ENCODE measurements at regions of chr12 and their contacts with region 1.

Region 1: DNA sequence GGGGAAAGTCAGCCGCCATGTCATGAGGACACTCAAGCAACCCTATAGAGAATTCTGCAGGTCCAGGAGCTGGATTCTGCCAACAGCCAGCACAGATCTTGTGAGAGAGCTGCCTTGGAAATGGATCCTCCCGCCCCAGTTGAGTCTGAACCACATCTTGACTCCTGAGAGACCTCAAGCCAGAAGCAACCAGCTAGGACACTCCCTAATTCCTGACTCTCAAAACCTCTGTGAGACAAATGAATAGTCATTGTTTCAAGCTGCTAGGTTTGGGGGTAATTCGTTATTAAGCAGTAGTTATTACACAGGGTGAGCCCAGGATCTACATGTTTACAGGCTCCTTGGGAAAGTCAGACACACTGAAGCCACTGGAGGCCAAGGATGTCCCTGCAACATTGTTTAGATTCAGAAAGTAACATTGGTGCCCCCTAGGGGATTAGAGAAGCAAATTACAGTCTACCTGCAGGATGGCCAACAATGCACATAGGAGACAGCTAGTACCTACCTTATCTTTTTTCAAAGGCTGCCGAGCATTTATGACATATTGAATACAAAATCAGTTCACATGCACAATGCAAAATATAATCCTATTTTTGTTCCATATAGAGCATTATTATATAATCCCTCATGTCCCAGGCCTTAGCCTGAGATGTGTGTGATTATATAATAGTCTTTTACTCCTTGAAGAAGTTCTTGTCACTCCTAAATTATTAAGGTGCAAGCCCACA is 57.9 kb upstream of the FICD start:
- DNase-seq: peak in 1 of 2 experiments; percentile 52
- H3K4me3 ChIP-seq: no peak overlapping the region
- H3K27ac ChIP-seq: no peak overlapping the region
- H3K4me1 ChIP-seq: peaks cover 0 to 3% (median 0%) of the 10 kb centered on the region in 4 experiments; a peak in 2 of 7 replicates
- H3K27me3 ChIP-seq: no peaks in the 10 kb centered on the region
- CTCF ChIP-seq: peak in 2 of 3 experiments; percentile 84 to 91; a peak in 3 of 4 replicates
- EP300 ChIP-seq: no peak
- POLR2A ChIP-seq: no peak
- RAD21 ChIP-seq: peak; percentile 87 to 94

Region 2: DNA sequence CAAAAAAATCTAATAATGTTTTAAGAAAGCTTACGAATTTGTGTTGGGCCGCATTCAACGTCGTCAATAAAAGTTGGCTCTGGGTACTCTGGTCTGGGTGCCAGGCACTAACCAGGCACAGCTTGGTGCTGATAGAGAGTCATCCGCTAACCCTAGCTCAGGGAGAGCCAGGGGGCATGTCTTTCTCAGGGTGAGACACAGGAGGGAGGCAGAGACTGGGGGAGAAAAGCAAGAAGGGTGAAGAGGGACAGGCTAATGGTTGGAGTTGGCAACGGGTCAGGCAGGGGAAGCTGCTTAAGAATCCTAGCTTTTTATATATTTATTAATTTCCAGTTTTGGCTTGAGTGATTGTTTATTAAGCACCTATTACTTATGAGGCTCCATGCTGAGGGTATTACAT is 223.0 kb before region 1 on chr12:
- CTCF ChIA-PET with region 1: interaction called, 15 read pairs
- POLR2A ChIA-PET with region 1: no interaction called
- DNase-seq: no peak
- H3K4me3 ChIP-seq: no peak overlapping the region
- H3K27ac ChIP-seq: no peak overlapping the region
- H3K4me1 ChIP-seq: peaks cover 5 to 27% (median 11%) of the 10 kb centered on the region in 4 experiments; a peak in 6 of 7 replicates
- H3K27me3 ChIP-seq: no peaks in the 10 kb centered on the region
- CTCF ChIP-seq: peak in 2 of 3 experiments; percentile 21 to 24; a peak in 1 of 4 replicates
- EP300 ChIP-seq: no peak
- POLR2A ChIP-seq: no peak
- RAD21 ChIP-seq: peak; percentile 49 to 67

Region 3: DNA sequence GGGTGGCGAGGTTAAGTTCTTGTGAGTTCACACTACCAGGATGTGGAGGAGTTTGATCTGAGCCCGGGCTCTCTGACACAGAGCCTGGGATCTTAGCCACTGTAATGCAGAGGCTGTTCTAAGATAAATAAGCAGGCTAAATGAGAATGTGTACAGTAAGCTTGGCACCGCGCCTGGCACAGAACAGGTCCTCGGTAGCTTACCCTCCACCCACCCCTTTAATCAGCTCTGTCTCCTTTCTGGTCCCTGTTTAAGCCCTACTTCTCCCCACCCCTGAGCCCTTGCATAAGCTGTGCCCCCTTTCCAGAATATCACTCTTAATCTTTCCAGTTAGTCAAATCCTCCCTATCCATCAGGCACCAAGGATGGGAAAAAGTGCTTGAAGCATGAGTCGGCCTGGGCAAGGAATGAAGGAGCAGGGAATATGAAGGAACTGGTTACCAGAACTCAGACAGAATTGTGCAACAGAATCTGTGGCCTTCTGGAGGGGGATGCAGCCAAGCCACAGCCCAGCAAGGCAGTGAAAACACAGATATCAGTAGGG is 85.3 kb before region 1 on chr12:
- CTCF ChIA-PET with region 1: interaction called, 40 read pairs
- POLR2A ChIA-PET with region 1: no interaction called
- DNase-seq: no peak
- H3K4me3 ChIP-seq: no peak overlapping the region
- H3K27ac ChIP-seq: no peak overlapping the region
- H3K4me1 ChIP-seq: peaks cover 0 to 6% (median 0%) of the 10 kb centered on the region in 4 experiments; a peak in 1 of 7 replicates
- H3K27me3 ChIP-seq: no peaks in the 10 kb centered on the region
- CTCF ChIP-seq: no peak
- EP300 ChIP-seq: no peak
- POLR2A ChIP-seq: no peak
- RAD21 ChIP-seq: no peak

Region 4: GRCh38 chr12:108468201-108468968 is 11.2 kb after region 1 on chr12:
- CTCF ChIA-PET with region 1: interaction called, 18 read pairs
- POLR2A ChIA-PET with region 1: interaction called, 5 read pairs
- DNase-seq: no peak
- H3K4me3 ChIP-seq: no peak overlapping the region
- H3K27ac ChIP-seq: no peak overlapping the region
- H3K4me1 ChIP-seq: no peaks in the 10 kb centered on the region
- H3K27me3 ChIP-seq: no peaks in the 10 kb centered on the region
- CTCF ChIP-seq: no peak
- EP300 ChIP-seq: no peak
- POLR2A ChIP-seq: no peak
- RAD21 ChIP-seq: no peak

Region 5: DNA sequence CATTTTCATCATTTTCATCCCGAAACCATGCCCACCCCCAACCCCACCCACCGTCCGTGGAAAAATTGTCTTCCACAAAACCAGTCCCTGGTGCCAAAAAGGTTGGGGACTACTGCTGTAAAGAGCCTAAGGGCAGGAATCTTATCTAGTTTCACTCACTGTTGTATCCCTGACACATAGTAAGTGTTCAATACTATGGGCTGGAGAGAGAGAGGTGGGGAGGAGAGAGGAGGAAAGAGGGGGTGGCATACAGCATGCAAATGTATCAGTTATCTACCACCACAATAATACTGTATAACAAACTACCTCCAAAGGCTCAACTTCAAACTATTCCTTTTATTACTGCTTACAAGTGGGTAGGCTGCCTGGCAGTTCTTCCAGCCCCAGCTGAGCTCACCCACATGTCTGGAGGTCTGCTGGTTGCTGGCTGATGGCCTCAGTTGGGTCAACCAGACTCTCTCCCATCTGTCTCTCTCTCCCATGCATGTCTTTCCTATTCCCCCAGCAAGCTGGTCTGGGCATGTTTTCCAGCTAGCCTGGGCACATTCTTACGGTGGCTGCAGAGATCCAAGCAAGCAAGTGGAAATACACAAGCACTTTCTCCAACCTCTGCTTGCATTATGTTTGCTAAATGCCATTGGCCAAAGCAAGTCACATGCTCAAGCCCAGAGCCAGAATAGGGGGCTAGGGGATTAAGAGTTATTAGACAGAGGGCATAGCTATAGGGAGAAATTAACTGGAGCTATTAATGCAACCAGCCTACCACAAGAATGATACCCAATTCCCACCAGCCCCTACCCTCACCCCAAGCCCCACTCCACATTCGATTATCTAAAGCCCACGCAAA is 26.3 kb after region 1 on chr12:
- CTCF ChIA-PET with region 1: interaction called, 10 read pairs
- POLR2A ChIA-PET with region 1: no interaction called
- DNase-seq: no peak
- H3K4me3 ChIP-seq: no peak overlapping the region
- H3K27ac ChIP-seq: no peak overlapping the region
- H3K4me1 ChIP-seq: peaks cover 0 to 5% (median 3%) of the 10 kb centered on the region in 4 experiments; a peak in 3 of 7 replicates
- H3K27me3 ChIP-seq: no peaks in the 10 kb centered on the region
- CTCF ChIP-seq: no peak
- EP300 ChIP-seq: no peak
- POLR2A ChIP-seq: no peak
- RAD21 ChIP-seq: no peak

Region 6: DNA sequence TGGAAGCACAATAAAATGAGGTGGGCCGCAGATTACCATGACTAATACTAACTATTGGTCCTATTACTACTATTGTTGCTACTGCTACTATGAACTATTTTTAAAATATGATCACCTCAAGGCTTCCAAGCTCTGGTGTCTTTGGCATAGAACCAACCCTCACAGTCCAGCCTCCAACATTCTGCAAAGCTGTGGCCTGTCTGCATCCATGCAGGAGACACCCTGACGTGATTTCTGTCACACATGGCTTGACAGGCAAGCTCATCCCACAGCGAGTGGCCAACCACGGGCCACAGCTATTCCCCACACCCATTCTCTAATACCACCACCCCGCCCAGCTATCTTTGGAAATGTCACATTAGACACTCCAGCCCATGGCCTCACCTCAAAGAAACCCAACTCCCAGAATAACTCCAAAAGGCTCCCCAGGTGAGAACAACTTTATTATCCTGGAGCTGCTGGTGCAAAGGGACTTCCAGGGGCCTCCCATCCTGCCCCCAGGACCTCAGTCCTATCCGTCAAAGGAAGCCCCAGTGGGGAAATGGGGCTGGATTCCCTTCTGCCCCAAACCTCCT is 119.6 kb after region 1 on chr12:
- CTCF ChIA-PET with region 1: no interaction called
- POLR2A ChIA-PET with region 1: no interaction called
- DNase-seq: no peak
- H3K4me3 ChIP-seq: no peak overlapping the region
- H3K27ac ChIP-seq: no peak overlapping the region
- H3K4me1 ChIP-seq: no peaks in the 10 kb centered on the region
- H3K27me3 ChIP-seq: no peaks in the 10 kb centered on the region
- CTCF ChIP-seq: no peak
- EP300 ChIP-seq: no peak
- POLR2A ChIP-seq: no peak
- RAD21 ChIP-seq: no peak

Measured in H1 (cell line).